Calu3 (cell line): ENCODE measurements at regions of chr7 and their contacts with region 1.

Region 1: DNA sequence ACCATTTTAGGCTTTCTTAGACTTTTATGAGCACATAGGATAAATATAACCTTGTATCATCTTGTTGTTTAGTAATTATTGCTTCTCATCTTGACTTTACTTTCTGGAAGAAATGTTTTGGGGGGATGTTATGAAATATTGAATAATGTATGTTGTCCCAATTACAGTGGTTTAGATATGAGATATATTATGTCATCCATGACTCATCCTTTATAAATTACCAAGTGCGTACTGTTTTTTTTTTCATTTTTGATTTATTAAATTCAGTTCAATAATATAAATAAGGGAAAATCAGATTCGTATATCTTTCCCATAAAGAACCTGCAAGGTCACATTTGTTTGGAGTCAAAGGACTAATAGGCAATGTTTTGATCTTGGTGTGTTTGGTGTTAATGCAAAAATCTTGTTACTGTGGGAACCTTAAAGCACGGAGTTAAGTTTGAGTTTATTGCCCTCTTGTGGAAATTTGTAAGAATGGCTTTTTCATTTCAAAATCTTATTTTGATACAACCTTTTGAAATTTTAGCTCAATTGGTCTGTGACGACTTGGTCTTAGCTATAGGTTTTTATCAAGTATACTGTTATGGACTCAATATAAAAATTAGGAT is 108.6 kb downstream of the SRI start:
- DNase-seq: no peak
- H3K4me3 Mint-ChIP-seq: no peak overlapping the region
- H3K27ac Mint-ChIP-seq: no peak overlapping the region
- H3K4me1 Mint-ChIP-seq: no peaks in the 10 kb centered on the region
- H3K27me3 Mint-ChIP-seq: no peaks in the 10 kb centered on the region
- CTCF ChIP-seq: no peak

Region 2: GRCh38 chr7:87506246-87507180 is 604.7 kb before region 1 on chr7:
- CTCF ChIA-PET with region 1: no interaction called
- intact Hi-C with region 1: loop called (anchors 1 kb)
- DNase-seq: no peak
- H3K4me3 Mint-ChIP-seq: no peak overlapping the region
- H3K27ac Mint-ChIP-seq: no peak overlapping the region
- H3K4me1 Mint-ChIP-seq: no peaks in the 10 kb centered on the region
- H3K27me3 Mint-ChIP-seq: no peaks in the 10 kb centered on the region
- CTCF ChIP-seq: peak; percentile 19

Region 3: GRCh38 chr7:87797798-87798403 is 313.3 kb before region 1 on chr7:
- CTCF ChIA-PET with region 1: no interaction called
- intact Hi-C with region 1: loop called (anchors 1 kb)
- DNase-seq: peak; percentile 14
- H3K4me3 Mint-ChIP-seq: no peak overlapping the region
- H3K27ac Mint-ChIP-seq: no peak overlapping the region
- H3K4me1 Mint-ChIP-seq: no peaks in the 10 kb centered on the region
- H3K27me3 Mint-ChIP-seq: no peaks in the 10 kb centered on the region
- CTCF ChIP-seq: no peak

Region 4: DNA sequence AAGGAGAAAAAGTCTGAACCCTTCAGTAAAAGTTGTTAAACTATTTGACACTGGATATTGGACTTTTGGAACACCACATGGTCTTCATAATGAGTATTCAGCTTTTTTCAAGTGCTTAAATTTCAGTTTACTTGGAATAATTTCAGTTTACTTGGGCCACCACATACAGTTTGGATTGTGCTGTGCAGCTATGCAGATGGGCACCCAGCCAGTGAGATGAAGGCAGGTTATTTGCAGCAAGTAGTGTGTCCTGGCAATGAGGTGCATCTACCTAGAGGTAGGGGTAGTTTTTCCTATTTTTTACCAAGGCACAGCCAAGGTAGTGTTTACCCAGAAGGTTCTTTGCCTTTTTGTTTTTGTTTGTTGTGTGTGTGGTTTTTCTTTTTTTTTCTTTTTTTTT is 201.1 kb before region 1 on chr7:
- CTCF ChIA-PET with region 1: no interaction called
- intact Hi-C with region 1: loop called (anchors 10 kb)
- DNase-seq: no peak
- H3K4me3 Mint-ChIP-seq: no peak overlapping the region
- H3K27ac Mint-ChIP-seq: no peak overlapping the region
- H3K4me1 Mint-ChIP-seq: no peaks in the 10 kb centered on the region
- H3K27me3 Mint-ChIP-seq: no peaks in the 10 kb centered on the region
- CTCF ChIP-seq: no peak

Region 5: GRCh38 chr7:88243345-88243909 is 132.2 kb after region 1 on chr7:
- CTCF ChIA-PET with region 1: no interaction called
- intact Hi-C with region 1: no loop called
- DNase-seq: peak; percentile 41
- H3K4me3 Mint-ChIP-seq: no peak overlapping the region
- H3K27ac Mint-ChIP-seq: no peak overlapping the region
- H3K4me1 Mint-ChIP-seq: peaks cover 9% of the 10 kb centered on the region
- H3K27me3 Mint-ChIP-seq: no peaks in the 10 kb centered on the region
- CTCF ChIP-seq: peak; percentile 48